WTC11 (cell line): ENCODE measurements at regions of chr11 and their contacts with region 1.

Region 1: GRCh38 chr11:107573438-107573837 is 7.9 kb upstream of the ALKBH8 start:
- DNase-seq: no peak
- ATAC-seq: no peak
- H3K4me3 Mint-ChIP-seq: no peak overlapping the region
- H3K27ac Mint-ChIP-seq: no peak overlapping the region
- H3K4me1 Mint-ChIP-seq: peaks cover 20% of the 10 kb centered on the region
- H3K27me3 Mint-ChIP-seq: no peaks in the 10 kb centered on the region
- CTCF ChIP-seq: no peak

Region 2: DNA sequence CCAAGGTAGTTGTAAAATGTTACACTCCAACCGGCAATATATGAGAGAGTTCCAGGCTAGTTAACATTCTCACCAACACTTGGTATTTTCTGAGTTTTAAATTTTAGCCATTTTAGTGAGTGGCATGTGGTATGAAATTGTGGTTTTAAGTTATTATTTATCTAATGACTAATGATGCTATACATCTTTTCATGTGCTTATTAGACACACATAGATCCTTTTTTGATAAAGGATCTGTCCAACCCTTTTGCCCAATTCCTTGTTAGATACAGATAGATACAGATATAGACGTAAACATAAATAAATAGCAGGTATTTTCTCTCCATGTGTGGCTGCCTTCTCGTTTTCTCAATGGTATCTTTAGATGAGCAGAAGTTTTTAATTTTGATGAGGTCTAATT is 47.2 kb before region 1 on chr11:
- CTCF ChIA-PET with region 1: no interaction called
- POLR2A ChIA-PET with region 1: no interaction called
- DNase-seq: no peak
- ATAC-seq: no peak
- H3K4me3 Mint-ChIP-seq: no peak overlapping the region
- H3K27ac Mint-ChIP-seq: no peak overlapping the region
- H3K4me1 Mint-ChIP-seq: no peaks in the 10 kb centered on the region
- H3K27me3 Mint-ChIP-seq: no peaks in the 10 kb centered on the region
- CTCF ChIP-seq: no peak

Region 3: DNA sequence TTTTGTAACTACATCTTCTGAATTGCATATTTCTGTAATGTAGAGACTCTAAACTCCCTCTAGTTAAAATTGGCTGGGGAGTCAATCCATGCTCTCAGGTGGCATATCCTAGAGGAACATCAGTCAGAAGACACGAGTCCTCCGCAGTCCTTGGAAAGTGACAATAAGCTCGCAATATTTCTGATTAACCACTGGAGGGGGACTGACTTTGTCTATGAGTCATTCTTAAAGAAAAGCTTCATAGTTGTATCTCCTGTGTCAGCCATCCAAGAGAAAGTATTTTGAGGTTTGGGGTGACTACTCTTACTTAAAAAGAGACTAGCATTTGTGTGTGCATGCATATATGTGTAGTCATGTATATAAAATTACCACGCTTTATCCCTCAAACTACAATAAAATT is 78.2 kb after region 1 on chr11:
- CTCF ChIA-PET with region 1: no interaction called
- POLR2A ChIA-PET with region 1: interaction called, 14 read pairs
- DNase-seq: no peak
- ATAC-seq: peak; percentile 36; the same call in 1 of the 2 replicates
- H3K4me3 Mint-ChIP-seq: no peak overlapping the region
- H3K27ac Mint-ChIP-seq: no peak overlapping the region
- H3K4me1 Mint-ChIP-seq: peaks cover 53% of the 10 kb centered on the region
- H3K27me3 Mint-ChIP-seq: no peaks in the 10 kb centered on the region
- CTCF ChIP-seq: no peak

Region 4: DNA sequence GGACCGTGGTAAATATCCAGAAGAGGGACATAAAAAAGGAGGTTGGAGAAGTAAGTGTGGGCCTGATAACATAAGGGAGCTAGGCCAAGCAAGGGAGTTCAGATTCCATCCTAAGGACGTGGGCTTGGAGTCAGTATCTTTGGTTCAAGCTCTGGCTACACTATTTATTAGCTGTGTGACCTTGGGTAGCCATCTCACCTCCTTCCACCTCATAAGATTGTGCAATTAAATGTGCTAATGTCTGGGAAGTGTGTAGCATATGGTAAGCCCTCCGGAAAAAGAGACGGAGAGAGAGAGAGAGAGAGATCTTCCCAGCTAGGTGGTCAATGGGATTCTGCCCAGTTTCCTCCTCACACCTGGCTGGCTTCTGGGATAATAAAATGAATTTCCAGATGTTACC is 1025.3 kb after region 1 on chr11:
- CTCF ChIA-PET with region 1: no interaction called
- POLR2A ChIA-PET with region 1: interaction called, 16 read pairs
- DNase-seq: no peak
- ATAC-seq: no peak
- H3K4me3 Mint-ChIP-seq: no peak overlapping the region
- H3K27ac Mint-ChIP-seq: no peak overlapping the region
- H3K4me1 Mint-ChIP-seq: peaks cover 22% of the 10 kb centered on the region
- H3K27me3 Mint-ChIP-seq: no peaks in the 10 kb centered on the region
- CTCF ChIP-seq: no peak